Posterior vena cava (tissue), 2 donors: ENCODE measurements at regions of chr3 and their contacts with region 1.

Region 1: GRCh38 chr3:101195951-101196713 is 124.2 kb downstream of the IMPG2 start:
- DNase-seq: no peak

Region 2: GRCh38 chr3:99708207-99708745 is 1487.9 kb before region 1 on chr3:
- intact Hi-C with region 1: loop called in 1 of 2 experiments (anchors 5 kb)
- DNase-seq: no peak

Region 3: GRCh38 chr3:100893590-100893989 is 302.5 kb before region 1 on chr3:
- intact Hi-C with region 1: loop called in 1 of 2 experiments (anchors 10 kb)
- DNase-seq: no peak

Region 4: GRCh38 chr3:101544161-101544850 is 348.2 kb after region 1 on chr3:
- intact Hi-C with region 1: no loop called
- DNase-seq: no peak

Region 5: DNA sequence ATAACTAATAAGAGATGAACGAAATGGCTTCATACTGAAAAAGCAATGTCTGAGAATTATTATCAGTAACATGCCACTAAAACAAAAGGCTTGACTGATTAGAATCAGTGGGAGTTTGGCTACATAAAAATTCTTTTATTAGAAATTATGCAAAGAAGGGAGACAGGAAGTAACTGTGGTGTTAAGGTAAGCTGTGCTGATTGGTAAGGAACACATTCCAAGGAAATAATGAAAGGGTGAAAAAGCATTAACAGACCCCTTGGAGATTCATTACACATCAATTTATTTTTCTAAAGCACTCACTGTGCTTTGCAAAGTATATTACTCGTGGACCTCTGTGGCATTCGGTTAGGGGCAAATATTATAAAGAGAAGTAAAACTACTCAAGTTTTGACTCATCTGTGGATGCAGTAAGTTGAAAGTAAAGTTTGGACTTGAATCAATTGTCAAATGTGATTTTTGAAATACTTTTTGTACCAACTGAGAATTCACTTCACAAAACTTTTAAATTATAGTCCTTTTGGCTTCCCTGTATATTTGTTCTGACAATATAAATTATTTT is 1062.6 kb after region 1 on chr3:
- intact Hi-C with region 1: no loop called
- DNase-seq: no peak